ENCODE measurements at regions of chr1 and their contacts with region 1.

Region 1: GRCh38 chr1:16139473-16139962 is 16.4 kb downstream of the EPHA2 start:
- DNase-seq: no peak
- H3K4me3 ChIP-seq: no peak overlapping the region
- H3K27ac ChIP-seq: no peak overlapping the region; the same call in 1 of the 2 replicates
- H3K4me1 ChIP-seq: peaks cover 0 to 25% (median 13%) of the 10 kb centered on the region in 4 experiments; a peak in 6 of 7 replicates
- H3K27me3 ChIP-seq: no peaks in the 10 kb centered on the region
- CTCF ChIP-seq: no peak
- EP300 ChIP-seq: no peak
- POLR2A ChIP-seq: no peak
- RAD21 ChIP-seq: no peak

Region 2: GRCh38 chr1:16070640-16071355 is 68.7 kb before region 1 on chr1:
- CTCF ChIA-PET with region 1: no interaction called
- POLR2A ChIA-PET with region 1: no interaction called
- DNase-seq: no peak
- H3K4me3 ChIP-seq: no peak overlapping the region
- H3K27ac ChIP-seq: no peak overlapping the region
- H3K4me1 ChIP-seq: peaks cover 5 to 26% (median 12%) of the 10 kb centered on the region in 4 experiments
- H3K27me3 ChIP-seq: peaks cover 4 to 36% (median 28%) of the 10 kb centered on the region in 4 experiments
- CTCF ChIP-seq: no peak
- EP300 ChIP-seq: no peak
- POLR2A ChIP-seq: no peak
- RAD21 ChIP-seq: no peak

Region 3: GRCh38 chr1:16122916-16123315 is 16.6 kb before region 1 on chr1:
- CTCF ChIA-PET with region 1: interaction called, 10 read pairs
- POLR2A ChIA-PET with region 1: interaction called, 51 read pairs
- DNase-seq: no peak
- H3K4me3 ChIP-seq: no peak overlapping the region
- H3K27ac ChIP-seq: no peak overlapping the region
- H3K4me1 ChIP-seq: peaks cover 0 to 18% (median 10%) of the 10 kb centered on the region in 4 experiments; a peak in 5 of 7 replicates
- H3K27me3 ChIP-seq: no peaks in the 10 kb centered on the region
- CTCF ChIP-seq: no peak
- EP300 ChIP-seq: no peak
- POLR2A ChIP-seq: no peak
- RAD21 ChIP-seq: no peak